Uterus (tissue), 4 donors: ENCODE measurements at regions of chr22 and their contacts with region 1.

Region 1: DNA sequence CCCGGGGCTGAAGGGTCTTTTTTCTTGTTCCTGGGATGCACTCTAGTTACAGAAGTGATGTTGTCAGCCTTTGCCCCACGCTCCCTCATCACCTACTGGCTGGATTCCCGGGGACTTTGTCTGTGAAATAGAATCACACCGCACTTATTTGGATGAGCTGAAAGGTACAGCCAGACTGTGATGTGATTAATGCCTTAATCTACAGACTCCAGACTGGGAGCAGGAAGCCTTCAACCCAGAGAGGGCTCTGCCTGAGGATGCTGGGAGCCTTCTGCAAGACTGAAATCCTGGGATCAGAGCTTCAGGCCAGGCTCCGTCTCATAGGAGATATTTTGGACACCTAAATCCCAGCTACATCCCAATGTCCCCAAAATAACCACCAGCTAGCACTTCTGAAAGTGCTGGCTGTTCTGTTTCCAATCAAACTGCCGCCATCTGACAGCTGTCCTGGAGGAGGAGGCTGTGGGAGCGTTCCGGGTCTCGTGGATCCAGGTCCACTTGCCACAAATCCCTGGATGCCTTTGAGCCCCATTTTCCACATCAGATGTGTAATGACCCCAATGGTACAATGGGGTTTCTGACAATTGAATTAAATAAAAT is 688.5 kb downstream of the TBC1D22A start:
- DNase-seq: no peak
- H3K4me3 ChIP-seq: no peak overlapping the region
- H3K27ac ChIP-seq: no peak overlapping the region
- H3K4me1 ChIP-seq: no peaks in the 10 kb centered on the region
- H3K27me3 ChIP-seq: no peaks in the 10 kb centered on the region
- CTCF ChIP-seq: no peak
- POLR2A ChIP-seq: no peak

Region 2: DNA sequence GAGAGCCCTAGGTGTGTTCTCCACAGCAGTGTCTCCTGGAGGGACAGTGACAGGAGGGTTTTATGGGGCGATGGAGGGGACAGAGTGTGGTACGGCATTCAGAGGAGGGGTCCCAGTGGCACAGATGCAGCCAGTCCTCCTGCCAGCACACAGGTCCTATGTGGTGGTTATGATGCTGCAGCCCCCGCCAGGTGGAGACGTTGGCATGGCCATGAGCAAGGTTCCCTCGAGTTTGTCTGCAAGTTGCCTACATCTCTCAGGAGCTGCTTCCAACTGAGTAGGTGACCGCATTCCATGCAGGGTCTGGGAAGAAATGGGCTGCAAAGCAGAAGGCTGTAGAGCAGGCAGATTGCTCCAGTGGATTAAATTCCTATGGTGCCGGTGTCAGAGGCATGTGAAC is 42.6 kb before region 1 on chr22:
- intact Hi-C with region 1: loop called (anchors 2 kb)
- DNase-seq: no peak
- H3K4me3 ChIP-seq: no peak overlapping the region
- H3K27ac ChIP-seq: no peak overlapping the region
- H3K4me1 ChIP-seq: no peaks in the 10 kb centered on the region
- H3K27me3 ChIP-seq: no peaks in the 10 kb centered on the region
- CTCF ChIP-seq: no peak
- POLR2A ChIP-seq: no peak